Right ventricle myocardium inferior (tissue), 1 donor: ENCODE measurements at regions of chr13 and their contacts with region 1.

Region 1: GRCh38 chr13:47426126-47426849 is 529.4 kb upstream of the HTR2A start:
- DNase-seq: no peak
- ATAC-seq: peak; percentile 85

Region 2: GRCh38 chr13:47277774-47278173 is 148.5 kb before region 1 on chr13:
- intact Hi-C with region 1: no loop called
- DNase-seq: no peak
- ATAC-seq: no peak

Region 3: DNA sequence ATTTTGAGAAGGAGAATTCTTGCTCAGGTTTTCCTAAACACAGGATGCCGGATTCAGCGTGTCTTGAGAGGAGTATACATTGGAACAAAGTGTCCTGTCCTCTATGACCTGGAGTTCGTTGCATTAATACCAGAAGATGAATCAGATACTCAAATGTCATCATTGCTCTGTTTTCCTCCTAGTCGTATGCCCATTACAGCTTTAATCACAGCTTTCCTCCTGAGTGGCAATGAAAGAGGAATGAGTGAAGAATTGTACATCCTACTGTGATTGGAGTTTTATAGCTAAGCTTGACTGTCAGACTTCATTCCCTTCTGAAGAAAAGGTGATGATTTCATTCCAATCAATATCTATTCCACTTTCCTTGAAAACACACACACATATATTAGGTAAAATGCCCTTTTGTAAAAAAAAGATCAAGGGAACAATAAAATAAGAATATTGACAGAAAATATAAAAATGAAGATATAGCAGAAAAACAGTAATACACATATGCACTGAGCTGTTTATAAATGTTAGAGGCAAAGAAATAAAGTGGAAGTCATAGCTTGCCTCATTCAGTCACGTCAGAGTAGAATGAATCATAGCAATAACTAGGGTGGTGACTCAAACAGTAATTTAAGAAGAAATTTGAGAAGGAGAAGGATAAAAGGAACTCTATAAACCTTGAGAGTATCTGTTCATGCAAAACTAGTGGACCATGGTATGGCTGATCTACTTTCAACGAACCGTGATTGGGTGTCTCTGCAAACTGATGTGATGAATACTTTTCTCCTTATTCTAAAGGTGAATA is 73.3 kb after region 1 on chr13:
- intact Hi-C with region 1: loop called (anchors 10 kb)
- DNase-seq: no peak
- ATAC-seq: no peak

Region 4: GRCh38 chr13:47549219-47549752 is 123.0 kb after region 1 on chr13:
- intact Hi-C with region 1: loop called (anchors 5 kb)
- DNase-seq: no peak
- ATAC-seq: no peak

Region 5: GRCh38 chr13:47723898-47724297 is 297.6 kb after region 1 on chr13:
- intact Hi-C with region 1: no loop called
- DNase-seq: no peak
- ATAC-seq: no peak